Activated B cell treated with CpG ODN at 0.5 μM for 24 hours (primary cell): ENCODE measurements at regions of chr16 and their contacts with region 1.

Region 1: DNA sequence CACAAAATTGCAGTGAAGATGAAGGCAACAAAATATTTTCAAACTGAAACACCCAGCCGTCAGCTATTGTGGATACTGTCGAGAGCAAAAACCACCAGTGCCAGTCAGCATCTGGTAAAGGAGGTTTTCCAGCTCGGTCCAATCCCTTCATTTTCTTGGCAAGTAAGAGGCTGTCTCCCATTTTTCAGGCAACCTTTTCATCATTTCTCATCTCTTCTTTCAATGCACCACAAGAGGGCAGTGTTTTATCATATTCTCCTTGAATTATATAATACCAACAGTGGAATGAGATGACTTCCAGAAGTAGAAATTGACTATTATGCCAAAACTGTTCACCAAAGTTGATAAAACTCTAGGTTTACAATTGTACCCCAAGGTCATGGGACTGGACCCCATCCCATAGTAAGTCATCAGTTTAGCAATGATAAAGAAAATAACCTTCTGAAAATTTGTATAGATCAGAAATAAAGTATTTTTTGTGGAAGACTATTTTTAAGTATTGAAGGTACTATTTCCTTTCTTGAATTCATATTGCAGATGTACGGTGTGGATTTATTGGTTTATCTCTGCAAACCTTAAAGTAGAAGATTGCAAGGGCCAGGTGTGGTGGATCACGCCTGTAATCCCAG is 16.8 kb downstream of the NQO1 start:
- DNase-seq: no peak
- ATAC-seq: no peak
- H3K4me3 Mint-ChIP-seq: no peak overlapping the region
- H3K27ac Mint-ChIP-seq: no peak overlapping the region
- H3K4me1 Mint-ChIP-seq: no peaks in the 10 kb centered on the region
- H3K27me3 Mint-ChIP-seq: no peaks in the 10 kb centered on the region
- CTCF ChIP-seq: peak; percentile 54

Region 2: DNA sequence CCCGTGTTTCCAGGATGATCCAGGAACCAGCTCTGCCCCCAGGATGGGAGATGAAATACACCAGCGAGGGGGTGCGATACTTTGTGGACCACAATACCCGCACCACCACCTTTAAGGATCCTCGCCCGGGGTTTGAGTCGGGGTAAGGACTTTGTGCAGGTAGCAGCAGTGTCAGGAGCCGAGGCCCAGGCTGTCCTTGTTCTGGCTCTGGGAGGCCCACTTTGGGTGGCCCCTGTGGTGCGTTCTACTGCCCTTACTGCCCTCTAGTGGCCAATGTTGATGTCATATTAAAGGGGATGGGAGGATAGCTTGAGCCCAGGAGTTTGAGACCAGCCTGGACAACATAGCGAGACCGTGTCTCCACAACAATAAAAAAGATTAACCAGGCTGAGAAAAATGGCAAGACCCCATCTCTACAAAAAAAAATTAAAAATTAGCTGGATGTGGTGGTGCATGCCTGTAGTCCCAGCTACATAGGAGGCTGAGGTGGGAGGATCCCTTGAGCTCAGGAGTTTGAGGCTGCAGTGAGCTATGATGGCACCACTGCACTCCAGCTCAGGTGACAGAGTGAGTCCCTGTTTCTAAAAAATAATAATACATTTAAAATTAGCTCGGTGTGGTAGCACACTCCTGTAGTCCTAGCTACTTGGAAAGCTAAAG is 220.7 kb after region 1 on chr16:
- CTCF ChIA-PET with region 1: interaction called, 3 read pairs
- POLR2A ChIA-PET with region 1: no interaction called
- intact Hi-C with region 1: loop called (anchors 1 kb)
- DNase-seq: peak; percentile 27
- ATAC-seq: peak; percentile 56
- H3K4me3 Mint-ChIP-seq: no peak overlapping the region
- H3K27ac Mint-ChIP-seq: no peak overlapping the region
- H3K4me1 Mint-ChIP-seq: no peaks in the 10 kb centered on the region
- H3K27me3 Mint-ChIP-seq: no peaks in the 10 kb centered on the region
- CTCF ChIP-seq: no peak